Activated CD4-positive, alpha-beta T cell treated with anti-CD3 and anti-CD28 coated beads for 36 hours (primary cell): ENCODE measurements at regions of chr6 and their contacts with region 1.

Region 1: GRCh38 chr6:106103728-106104109 is 17.6 kb downstream of the PRDM1 start:
- DNase-seq: peak; percentile 65
- ATAC-seq: peak; percentile 47
- H3K4me3 Mint-ChIP-seq: peak overlapping the region; percentile 82
- H3K27ac Mint-ChIP-seq: peak overlapping the region; percentile 62
- H3K4me1 Mint-ChIP-seq: peaks cover 77% of the 10 kb centered on the region
- H3K27me3 Mint-ChIP-seq: peaks cover 16% of the 10 kb centered on the region

Region 2: DNA sequence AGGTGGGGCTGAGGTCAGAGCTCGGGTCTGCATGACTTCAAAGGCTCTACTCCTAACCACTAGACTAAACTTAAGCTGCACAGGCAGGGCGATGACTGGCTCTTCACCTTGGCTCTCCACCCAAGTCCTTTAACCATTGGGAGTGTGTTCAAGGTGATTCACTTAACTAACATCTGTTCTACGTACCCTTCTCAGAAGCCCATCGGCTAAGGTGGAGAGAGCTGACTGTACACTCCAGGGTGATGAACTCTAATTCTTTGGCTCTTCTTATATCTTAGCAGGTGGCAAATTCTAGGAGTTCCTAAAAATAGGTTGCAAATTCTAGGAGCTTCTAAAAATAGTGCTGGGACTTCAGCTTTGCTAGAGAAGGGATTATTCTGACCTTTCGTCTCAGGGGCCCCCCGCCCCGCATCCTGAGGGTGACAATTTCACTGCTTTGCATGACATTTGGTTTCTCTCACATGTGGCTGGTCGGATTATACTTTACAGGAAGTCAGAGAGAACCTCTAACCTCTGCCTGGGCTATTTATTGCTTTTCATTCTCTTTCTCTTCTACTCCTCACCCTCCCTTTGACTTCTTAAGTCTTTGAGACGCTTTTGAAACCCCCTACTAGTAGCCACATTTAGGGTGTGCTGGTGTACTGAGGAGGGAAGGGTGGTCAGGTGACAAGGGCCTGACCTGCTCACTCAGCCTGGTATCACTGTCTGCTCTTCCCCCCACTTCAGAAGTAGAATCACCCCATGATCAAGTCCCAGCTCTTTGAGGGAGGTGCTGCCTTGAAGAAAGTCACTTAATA is 37.9 kb after region 1 on chr6:
- CTCF ChIA-PET with region 1: no interaction called
- POLR2A ChIA-PET with region 1: interaction called, 3 read pairs
- intact Hi-C with region 1: loop called (anchors 1 to 2 kb)
- DNase-seq: peak; percentile 76
- ATAC-seq: peak; percentile 93
- H3K4me3 Mint-ChIP-seq: peak overlapping the region; percentile 26
- H3K27ac Mint-ChIP-seq: peak overlapping the region; percentile 85
- H3K4me1 Mint-ChIP-seq: peaks cover 48% of the 10 kb centered on the region
- H3K27me3 Mint-ChIP-seq: peaks cover 2% of the 10 kb centered on the region

Region 3: DNA sequence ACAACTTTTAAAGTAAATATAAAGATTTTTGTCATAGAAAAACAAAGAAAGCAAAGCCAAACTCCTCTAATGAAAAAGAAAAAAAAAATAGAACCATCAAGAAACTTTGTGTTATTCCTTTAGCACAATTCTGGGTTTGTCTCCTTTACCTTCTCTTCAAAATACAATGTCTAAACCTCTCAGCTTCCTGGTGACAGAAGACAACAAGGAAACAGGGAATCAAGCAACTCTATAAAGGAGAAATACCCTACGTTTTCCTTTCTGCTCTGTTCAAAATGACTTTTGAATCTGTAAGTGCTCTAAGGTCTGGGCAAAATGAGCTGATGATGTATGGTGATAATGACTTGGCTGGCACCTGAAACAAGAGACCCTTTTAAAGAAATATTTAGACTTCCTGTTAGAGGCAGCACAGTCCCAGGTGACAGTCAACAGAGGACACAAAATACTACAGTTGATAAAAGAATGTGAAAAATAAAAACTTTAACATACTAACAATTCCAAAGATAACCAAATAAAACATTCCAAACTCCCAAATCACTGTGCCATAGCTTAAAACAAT is 83.8 kb after region 1 on chr6:
- CTCF ChIA-PET with region 1: interaction called, 3 read pairs
- POLR2A ChIA-PET with region 1: interaction called, 4 read pairs
- intact Hi-C with region 1: loop called (anchors 1 to 2 kb)
- DNase-seq: no peak
- ATAC-seq: no peak
- H3K4me3 Mint-ChIP-seq: no peak overlapping the region
- H3K27ac Mint-ChIP-seq: peak overlapping the region; percentile 55
- H3K4me1 Mint-ChIP-seq: peaks cover 56% of the 10 kb centered on the region
- H3K27me3 Mint-ChIP-seq: no peaks in the 10 kb centered on the region